ENCODE measurements at regions of chr6 and their contacts with region 1.

Region 1: GRCh38 chr6:100228428-100228827 is 234.4 kb upstream of the MCHR2 start:
- DNase-seq: no peak
- ATAC-seq: peak; percentile 6
- H3K4me3 ChIP-seq: peak overlapping the region; percentile 33 to 70 (median 56)
- H3K4me3 Mint-ChIP-seq: peak overlapping the region; percentile 82
- H3K27ac ChIP-seq: peak overlapping the region; percentile 36 to 68
- H3K27ac Mint-ChIP-seq: peak overlapping the region; percentile 76
- H3K4me1 ChIP-seq: peaks cover 0 to 6% of the 10 kb centered on the region in 2 donors
- H3K4me1 Mint-ChIP-seq: peaks cover 15% of the 10 kb centered on the region
- H3K27me3 ChIP-seq: peaks cover 0 to 3% (median 0%) of the 10 kb centered on the region in 4 experiments
- H3K27me3 Mint-ChIP-seq: no peaks in the 10 kb centered on the region
- CTCF ChIP-seq: no peak

Region 2: GRCh38 chr6:100179576-100179975 is 48.9 kb before region 1 on chr6:
- CTCF ChIA-PET with region 1: no interaction called
- POLR2A ChIA-PET with region 1: no interaction called
- intact Hi-C with region 1: loop called (anchors 1 kb)
- DNase-seq: no peak
- ATAC-seq: no peak
- H3K4me3 ChIP-seq: no peak overlapping the region
- H3K4me3 Mint-ChIP-seq: no peak overlapping the region
- H3K27ac ChIP-seq: no peak overlapping the region
- H3K27ac Mint-ChIP-seq: no peak overlapping the region
- H3K4me1 ChIP-seq: no peaks in the 10 kb centered on the region
- H3K4me1 Mint-ChIP-seq: no peaks in the 10 kb centered on the region
- H3K27me3 ChIP-seq: no peaks in the 10 kb centered on the region
- H3K27me3 Mint-ChIP-seq: peaks cover 5% of the 10 kb centered on the region
- CTCF ChIP-seq: no peak

Region 3: GRCh38 chr6:100283283-100283682 is 54.9 kb after region 1 on chr6:
- CTCF ChIA-PET with region 1: no interaction called
- POLR2A ChIA-PET with region 1: no interaction called
- intact Hi-C with region 1: no loop called
- DNase-seq: no peak
- ATAC-seq: no peak
- H3K4me3 ChIP-seq: no peak overlapping the region
- H3K4me3 Mint-ChIP-seq: no peak overlapping the region
- H3K27ac ChIP-seq: no peak overlapping the region
- H3K27ac Mint-ChIP-seq: no peak overlapping the region
- H3K4me1 ChIP-seq: no peaks in the 10 kb centered on the region
- H3K4me1 Mint-ChIP-seq: no peaks in the 10 kb centered on the region
- H3K27me3 ChIP-seq: peaks cover 0 to 2% (median 0%) of the 10 kb centered on the region in 4 experiments
- H3K27me3 Mint-ChIP-seq: peaks cover 4% of the 10 kb centered on the region
- CTCF ChIP-seq: no peak

Region 4: GRCh38 chr6:100745419-100746041 is 517.1 kb after region 1 on chr6:
- CTCF ChIA-PET with region 1: no interaction called
- POLR2A ChIA-PET with region 1: no interaction called
- intact Hi-C with region 1: no loop called
- DNase-seq: no peak
- ATAC-seq: no peak
- H3K4me3 ChIP-seq: no peak overlapping the region
- H3K4me3 Mint-ChIP-seq: no peak overlapping the region
- H3K27ac ChIP-seq: no peak overlapping the region
- H3K27ac Mint-ChIP-seq: no peak overlapping the region
- H3K4me1 ChIP-seq: no peaks in the 10 kb centered on the region
- H3K4me1 Mint-ChIP-seq: no peaks in the 10 kb centered on the region
- H3K27me3 ChIP-seq: no peaks in the 10 kb centered on the region
- H3K27me3 Mint-ChIP-seq: no peaks in the 10 kb centered on the region
- CTCF ChIP-seq: no peak